MCF 10A (cell line): ENCODE measurements at regions of chr7 and their contacts with region 1.

Region 1: GRCh38 chr7:76133164-76133775 is 68.4 kb upstream of the SRRM3 start:
- DNase-seq: no peak
- H3K4me3 Mint-ChIP-seq: no peak overlapping the region
- H3K27ac Mint-ChIP-seq: no peak overlapping the region
- H3K4me1 Mint-ChIP-seq: no peaks in the 10 kb centered on the region
- H3K27me3 Mint-ChIP-seq: peaks cover 44% of the 10 kb centered on the region
- CTCF ChIP-seq: no peak

Region 2: GRCh38 chr7:75776295-75776971 is 356.8 kb before region 1 on chr7:
- CTCF ChIA-PET with region 1: no interaction called
- POLR2A ChIA-PET with region 1: no interaction called
- intact Hi-C with region 1: loop called (anchors 5 kb)
- DNase-seq: peak; percentile 59
- H3K4me3 Mint-ChIP-seq: no peak overlapping the region
- H3K27ac Mint-ChIP-seq: no peak overlapping the region
- H3K4me1 Mint-ChIP-seq: peaks cover 12% of the 10 kb centered on the region
- H3K27me3 Mint-ChIP-seq: peaks cover 26% of the 10 kb centered on the region
- CTCF ChIP-seq: peak; percentile 17

Region 3: GRCh38 chr7:75866489-75867389 is 266.5 kb before region 1 on chr7:
- CTCF ChIA-PET with region 1: interaction called, 3 read pairs
- POLR2A ChIA-PET with region 1: no interaction called
- intact Hi-C with region 1: loop called (anchors 2 kb)
- DNase-seq: peak; percentile 76
- H3K4me3 Mint-ChIP-seq: no peak overlapping the region
- H3K27ac Mint-ChIP-seq: no peak overlapping the region
- H3K4me1 Mint-ChIP-seq: peaks cover 6% of the 10 kb centered on the region
- H3K27me3 Mint-ChIP-seq: no peaks in the 10 kb centered on the region
- CTCF ChIP-seq: peak; percentile 79

Region 4: GRCh38 chr7:75945297-75946168 is 187.7 kb before region 1 on chr7:
- CTCF ChIA-PET with region 1: no interaction called
- POLR2A ChIA-PET with region 1: no interaction called
- intact Hi-C with region 1: loop called (anchors 1 kb)
- DNase-seq: peak; percentile 54
- H3K4me3 Mint-ChIP-seq: no peak overlapping the region
- H3K27ac Mint-ChIP-seq: peak overlapping the region; percentile 81
- H3K4me1 Mint-ChIP-seq: peaks cover 27% of the 10 kb centered on the region
- H3K27me3 Mint-ChIP-seq: no peaks in the 10 kb centered on the region
- CTCF ChIP-seq: no peak

Region 5: DNA sequence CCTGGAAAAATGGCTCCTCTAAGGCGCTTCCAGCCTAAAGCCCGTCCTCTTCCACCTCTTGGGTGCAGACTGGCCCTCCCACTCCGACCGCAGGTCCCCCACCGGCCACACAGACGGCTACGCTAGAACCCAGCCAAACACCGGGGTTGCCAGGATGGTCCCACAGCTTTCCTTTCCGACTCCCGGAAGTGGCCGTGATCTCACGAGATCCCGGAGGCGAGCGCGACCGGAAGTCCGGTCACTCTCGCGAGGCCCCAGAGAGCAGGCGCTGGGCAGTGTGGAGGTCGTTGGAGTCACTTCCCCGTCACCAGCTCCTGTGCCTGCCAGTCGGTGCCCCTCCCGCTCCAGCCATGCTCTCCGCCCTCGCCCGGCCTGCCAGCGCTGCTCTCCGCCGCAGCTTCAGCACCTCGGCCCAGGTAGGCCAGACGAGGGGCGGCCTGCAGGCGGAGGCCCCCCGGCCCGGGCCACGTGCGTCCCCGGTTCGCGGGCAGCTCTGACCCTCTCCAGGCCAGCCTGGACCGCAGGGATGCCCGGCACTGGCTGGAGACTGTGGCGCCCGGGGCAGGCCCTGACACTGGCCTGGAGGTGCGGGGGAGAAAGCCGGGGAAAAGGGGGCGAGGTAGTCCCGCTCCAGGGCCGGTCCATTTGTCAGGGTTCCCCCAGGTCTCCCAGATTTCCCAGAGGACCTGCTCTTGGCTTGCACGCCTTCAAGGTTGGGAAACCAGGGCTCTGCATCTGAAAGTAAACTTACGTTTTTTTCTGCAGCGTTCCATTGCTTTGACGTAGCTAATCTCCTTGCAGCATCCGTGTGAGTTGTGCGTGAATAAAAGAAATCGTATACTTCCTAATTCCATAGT is 85.2 kb before region 1 on chr7 and contains the starts of genes MDH2 and STYXL1:
- CTCF ChIA-PET with region 1: interaction called, 13 read pairs
- POLR2A ChIA-PET with region 1: interaction called, 9 read pairs
- intact Hi-C with region 1: loop called (anchors 5 kb)
- DNase-seq: peak; percentile 96
- H3K4me3 Mint-ChIP-seq: peak within 1 kb of the TSS; percentile 97
- H3K27ac Mint-ChIP-seq: peak within 1 kb of the TSS; percentile 99
- H3K4me1 Mint-ChIP-seq: peaks cover 27% of the 10 kb centered on the region
- H3K27me3 Mint-ChIP-seq: no peaks in the 10 kb centered on the region
- CTCF ChIP-seq: no peak
- total RNA-seq, gene MDH2: 278 and 328 TPM in 2 replicates
- total RNA-seq, gene STYXL1: 49.3 and 79.7 TPM in 2 replicates

Region 6: DNA sequence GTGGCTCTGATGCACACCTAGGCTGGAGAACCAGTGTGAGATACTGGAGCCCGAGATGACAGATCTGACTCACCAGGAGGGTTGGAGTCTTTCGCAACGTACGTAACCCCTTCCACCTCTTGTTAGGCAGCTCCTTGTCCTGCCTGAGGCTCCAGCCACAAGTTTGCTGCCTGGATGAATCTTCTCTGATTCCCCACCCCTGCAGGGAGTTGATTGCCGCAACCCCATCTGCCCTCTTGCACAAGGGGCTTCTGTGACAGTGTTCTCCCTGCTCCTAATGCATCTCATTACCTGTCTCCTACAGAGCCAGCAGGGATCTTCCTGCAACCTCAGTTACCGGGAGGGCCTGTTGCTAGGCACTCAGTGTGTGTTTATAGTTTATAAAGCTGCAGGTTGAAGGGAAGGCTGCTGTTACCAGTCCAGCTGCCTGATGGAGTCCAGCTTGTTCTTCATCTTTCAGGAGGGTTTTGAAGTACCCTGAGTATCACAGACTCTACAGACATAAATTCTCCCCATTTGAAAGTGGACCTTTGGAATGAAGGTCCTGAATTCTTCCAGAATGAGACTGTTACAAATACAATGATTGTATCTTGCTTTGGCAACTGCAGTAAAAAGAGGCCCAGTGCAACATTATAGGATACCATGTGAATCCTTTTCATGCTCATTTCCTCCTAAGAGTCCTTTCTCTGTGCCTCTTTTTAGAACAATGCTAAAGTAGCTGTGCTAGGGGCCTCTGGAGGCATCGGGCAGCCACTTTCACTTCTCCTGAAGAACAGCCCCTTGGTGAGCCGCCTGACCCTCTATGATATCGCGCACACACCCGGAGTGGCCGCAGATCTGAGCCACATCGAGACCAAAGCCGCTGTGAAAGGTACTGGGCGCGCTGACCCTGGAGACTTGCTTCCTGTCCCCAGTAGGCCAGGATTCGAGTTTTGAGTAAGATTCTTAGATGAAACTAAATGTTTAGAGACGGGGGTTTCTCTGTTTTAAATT is 78.8 kb before region 1 on chr7:
- CTCF ChIA-PET with region 1: interaction called, 11 read pairs
- POLR2A ChIA-PET with region 1: interaction called, 3 read pairs
- intact Hi-C with region 1: loop called (anchors 5 kb)
- DNase-seq: peak; percentile 96
- H3K4me3 Mint-ChIP-seq: no peak overlapping the region
- H3K27ac Mint-ChIP-seq: peak overlapping the region; percentile 35
- H3K4me1 Mint-ChIP-seq: peaks cover 26% of the 10 kb centered on the region
- H3K27me3 Mint-ChIP-seq: no peaks in the 10 kb centered on the region
- CTCF ChIP-seq: no peak

Region 7: GRCh38 chr7:76069238-76069638 is 64.0 kb before region 1 on chr7:
- CTCF ChIA-PET with region 1: interaction called, 42 read pairs
- POLR2A ChIA-PET with region 1: no interaction called
- intact Hi-C with region 1: loop called (anchors 1 kb)
- DNase-seq: peak; percentile 97
- H3K4me3 Mint-ChIP-seq: no peak overlapping the region
- H3K27ac Mint-ChIP-seq: no peak overlapping the region
- H3K4me1 Mint-ChIP-seq: peaks cover 6% of the 10 kb centered on the region
- H3K27me3 Mint-ChIP-seq: no peaks in the 10 kb centered on the region
- CTCF ChIP-seq: peak; percentile 43